ENCODE measurements at regions of chr3 and their contacts with region 1.

Region 1: DNA sequence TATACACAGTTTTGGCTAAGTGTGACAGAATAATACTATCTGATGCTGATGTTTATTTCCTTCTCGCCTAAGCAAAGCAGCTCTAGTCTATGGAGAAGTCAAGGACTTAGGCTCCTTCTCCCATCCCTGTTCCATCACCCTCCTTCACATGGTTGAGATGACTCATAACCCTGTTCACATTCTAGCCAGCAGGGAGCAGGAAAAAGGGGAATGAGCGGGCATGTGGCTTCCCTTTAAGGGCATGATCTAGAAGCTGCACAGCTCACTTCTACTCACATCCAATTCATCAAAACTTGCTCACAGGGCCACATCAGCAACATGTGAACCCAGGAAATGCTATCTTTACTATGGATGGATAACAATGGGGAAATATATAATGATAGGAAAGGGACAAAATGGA is 40.9 kb downstream of the CBLB start:
- DNase-seq: peak; percentile 26
- H3K4me3 Mint-ChIP-seq: peak overlapping the region; percentile 41
- H3K27ac Mint-ChIP-seq: peak overlapping the region; percentile 99
- H3K4me1 Mint-ChIP-seq: peaks cover 84% of the 10 kb centered on the region
- H3K27me3 Mint-ChIP-seq: no peaks in the 10 kb centered on the region

Region 2: DNA sequence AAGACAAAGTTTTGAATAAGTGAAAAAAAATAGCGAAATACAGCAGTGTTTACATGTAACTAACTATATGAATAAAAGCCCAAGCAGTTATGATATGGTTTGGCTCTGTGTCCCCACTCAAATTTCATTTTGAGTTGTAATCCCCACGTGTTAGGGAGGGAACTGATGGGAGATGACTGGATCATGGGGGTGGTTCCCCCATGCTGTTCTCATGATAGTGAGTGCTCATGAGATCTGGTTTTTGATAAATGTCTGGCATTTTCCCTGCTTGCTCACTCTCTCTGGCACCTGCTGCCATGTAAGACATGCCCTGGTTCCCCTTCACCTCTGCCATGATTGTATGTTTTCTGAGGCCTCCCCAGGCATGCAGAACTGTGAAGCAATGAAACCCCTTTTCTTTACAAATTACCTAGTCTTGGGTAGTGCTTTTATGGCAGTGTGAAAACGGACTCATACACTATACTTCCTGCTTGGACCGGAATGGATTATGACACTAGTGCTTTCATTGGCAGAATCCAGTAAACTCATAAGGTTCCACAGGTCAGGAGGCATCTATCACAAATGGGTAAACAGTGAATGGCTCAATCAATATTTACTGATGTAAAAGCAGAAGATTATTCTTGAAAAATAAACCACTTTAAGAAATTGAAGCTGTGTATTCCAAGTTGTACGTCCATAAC is 151.2 kb before region 1 on chr3:
- CTCF ChIA-PET with region 1: no interaction called
- intact Hi-C with region 1: loop called (anchors 1 kb)
- DNase-seq: peak; percentile 77
- H3K4me3 Mint-ChIP-seq: no peak overlapping the region
- H3K27ac Mint-ChIP-seq: peak overlapping the region; percentile 87
- H3K4me1 Mint-ChIP-seq: peaks cover 18% of the 10 kb centered on the region
- H3K27me3 Mint-ChIP-seq: no peaks in the 10 kb centered on the region

Region 3: DNA sequence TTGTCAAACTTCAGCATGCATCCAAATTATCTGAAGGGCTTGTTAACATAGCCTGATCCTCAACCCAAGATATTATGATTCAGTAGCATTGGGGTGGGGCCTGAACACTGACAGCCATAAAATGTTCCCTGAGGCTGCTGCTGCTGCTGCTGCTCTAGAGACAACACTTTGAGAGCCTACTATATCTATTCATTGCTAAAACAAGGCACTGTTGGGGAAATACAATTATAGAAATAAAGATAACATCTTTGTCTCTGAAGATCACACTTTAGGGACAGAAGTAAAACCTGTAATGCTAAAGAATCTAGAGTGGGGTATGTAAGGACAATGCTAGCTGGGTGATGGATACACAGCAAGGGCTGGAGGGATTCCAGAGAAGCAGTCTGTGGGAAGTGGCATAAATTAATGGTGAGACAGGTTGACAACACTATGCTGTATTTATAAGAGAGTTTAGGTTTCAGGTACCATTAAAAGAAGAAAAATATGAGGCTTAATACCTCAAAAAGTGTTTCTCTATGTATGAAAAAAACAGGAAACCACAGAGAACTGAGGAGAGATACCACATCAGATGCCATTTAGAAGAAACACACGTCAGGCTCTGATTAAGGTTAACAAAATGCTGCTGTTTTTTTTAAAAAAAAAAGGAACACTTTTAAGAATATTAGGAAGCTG is 75.1 kb before region 1 on chr3:
- CTCF ChIA-PET with region 1: no interaction called
- intact Hi-C with region 1: loop called (anchors 1 kb)
- DNase-seq: peak; percentile 46
- H3K4me3 Mint-ChIP-seq: peak overlapping the region; percentile 42
- H3K27ac Mint-ChIP-seq: peak overlapping the region; percentile 92
- H3K4me1 Mint-ChIP-seq: peaks cover 77% of the 10 kb centered on the region
- H3K27me3 Mint-ChIP-seq: no peaks in the 10 kb centered on the region

Region 4: GRCh38 chr3:105781871-105782270 is 46.1 kb before region 1 on chr3:
- CTCF ChIA-PET with region 1: no interaction called
- intact Hi-C with region 1: loop called (anchors 1 kb)
- DNase-seq: no peak
- H3K4me3 Mint-ChIP-seq: no peak overlapping the region
- H3K27ac Mint-ChIP-seq: peak overlapping the region; percentile 51
- H3K4me1 Mint-ChIP-seq: peaks cover 65% of the 10 kb centered on the region
- H3K27me3 Mint-ChIP-seq: no peaks in the 10 kb centered on the region

Region 5: GRCh38 chr3:105843994-105844393 is 16.0 kb after region 1 on chr3:
- CTCF ChIA-PET with region 1: no interaction called
- intact Hi-C with region 1: loop called (anchors 1 kb)
- DNase-seq: no peak
- H3K4me3 Mint-ChIP-seq: no peak overlapping the region
- H3K27ac Mint-ChIP-seq: no peak overlapping the region
- H3K4me1 Mint-ChIP-seq: peaks cover 52% of the 10 kb centered on the region
- H3K27me3 Mint-ChIP-seq: no peaks in the 10 kb centered on the region

Region 6: DNA sequence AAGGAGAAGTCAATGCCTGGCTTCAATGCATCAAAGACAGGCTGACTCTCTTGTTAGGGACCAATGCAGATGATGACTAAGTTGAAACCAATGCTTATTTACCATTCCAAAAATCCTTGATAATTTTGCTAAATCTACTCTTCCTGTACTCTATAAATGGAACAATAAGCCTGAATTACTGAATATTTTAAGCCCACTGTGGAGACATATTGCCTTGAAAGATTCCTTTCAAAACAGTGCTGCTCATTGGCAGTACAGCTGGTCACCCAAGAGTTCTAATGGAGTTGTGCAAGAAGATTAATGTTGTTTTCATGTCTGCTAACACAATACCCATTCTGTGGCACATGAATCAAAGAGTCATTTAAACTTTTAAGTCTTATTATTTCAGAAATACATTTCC is 221.9 kb after region 1 on chr3:
- CTCF ChIA-PET with region 1: no interaction called
- intact Hi-C with region 1: no loop called
- DNase-seq: no peak
- H3K4me3 Mint-ChIP-seq: no peak overlapping the region
- H3K27ac Mint-ChIP-seq: no peak overlapping the region
- H3K4me1 Mint-ChIP-seq: peaks cover 3% of the 10 kb centered on the region
- H3K27me3 Mint-ChIP-seq: no peaks in the 10 kb centered on the region

Region 7: DNA sequence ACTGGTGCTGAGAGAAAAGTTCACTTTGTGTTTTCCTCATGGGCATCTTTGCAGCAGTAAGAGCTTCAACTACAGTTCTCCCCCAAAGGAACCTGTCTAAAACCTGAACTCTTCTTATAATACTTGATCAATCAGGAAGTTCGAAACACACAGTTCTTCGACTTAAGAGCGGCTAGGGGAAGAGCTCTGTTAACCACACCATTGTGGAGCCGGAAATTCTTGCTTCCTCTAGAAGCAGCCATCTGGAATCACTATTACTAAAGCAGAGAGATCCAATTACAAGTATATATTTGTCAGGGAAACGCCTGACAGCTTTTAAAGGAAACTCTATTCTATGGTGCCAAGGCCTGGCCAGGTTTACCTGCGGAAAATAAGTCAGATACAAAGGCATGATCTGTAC is 378.2 kb after region 1 on chr3:
- CTCF ChIA-PET with region 1: no interaction called
- intact Hi-C with region 1: loop called (anchors 1 kb)
- DNase-seq: peak; percentile 47
- H3K4me3 Mint-ChIP-seq: peak overlapping the region; percentile 55
- H3K27ac Mint-ChIP-seq: peak overlapping the region; percentile 98
- H3K4me1 Mint-ChIP-seq: peaks cover 55% of the 10 kb centered on the region
- H3K27me3 Mint-ChIP-seq: no peaks in the 10 kb centered on the region

Region 8: DNA sequence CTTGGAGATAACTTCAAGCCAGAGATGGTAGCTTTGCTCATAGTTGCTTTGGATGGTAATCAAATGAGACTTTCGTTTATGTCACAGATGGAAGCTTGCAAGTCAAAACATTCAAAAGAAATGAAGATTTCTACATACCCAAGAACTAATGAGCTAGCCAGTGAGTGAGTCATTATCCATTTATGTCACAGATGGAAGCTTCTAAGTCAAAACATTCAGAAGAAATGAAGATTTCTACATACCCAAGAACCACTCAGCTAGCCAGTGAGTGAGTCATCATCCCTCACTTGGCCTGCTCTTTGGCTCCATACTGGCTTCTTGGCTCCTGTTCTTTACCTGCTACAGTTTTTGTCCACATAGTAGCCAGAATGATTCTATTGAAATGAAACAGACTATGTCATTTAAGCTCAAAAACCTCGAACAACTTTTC is 600.6 kb after region 1 on chr3:
- CTCF ChIA-PET with region 1: no interaction called
- intact Hi-C with region 1: loop called (anchors 1 kb)
- DNase-seq: peak; percentile 66
- H3K4me3 Mint-ChIP-seq: no peak overlapping the region
- H3K27ac Mint-ChIP-seq: peak overlapping the region; percentile 81
- H3K4me1 Mint-ChIP-seq: peaks cover 46% of the 10 kb centered on the region
- H3K27me3 Mint-ChIP-seq: no peaks in the 10 kb centered on the region

Measured in activated naive CD4-positive, alpha-beta T cell treated with anti-CD3 and anti-CD28 coated beads for 36 hours (primary cell).